Activated T-helper 2 cell treated with anti-CD3 and anti-CD28 coated beads, Interferon-gamma antibody, Interleukin-2, Interleukin-4, amounts not matched to agents 10 μg/mL and 5 μg/mL and 100 μg/mL, durations not matched to agents 14 hours and 24 hours and 36 hours (primary cell): ENCODE measurements at regions of chr3 and their contacts with region 1.

Region 1: GRCh38 chr3:113947372-113948014 is at the start of gene ZDHHC23:
- DNase-seq: peak; percentile 64
- H3K4me3 Mint-ChIP-seq: peak within 1 kb of the TSS; percentile 75
- H3K27ac Mint-ChIP-seq: peak within 1 kb of the TSS; percentile 61
- H3K4me1 Mint-ChIP-seq: peaks cover 7% of the 10 kb centered on the region
- H3K27me3 Mint-ChIP-seq: peaks cover 53% of the 10 kb centered on the region
- total RNA-seq, gene ZDHHC23: 2.6 and 2.9 TPM in 2 replicates

Region 2: DNA sequence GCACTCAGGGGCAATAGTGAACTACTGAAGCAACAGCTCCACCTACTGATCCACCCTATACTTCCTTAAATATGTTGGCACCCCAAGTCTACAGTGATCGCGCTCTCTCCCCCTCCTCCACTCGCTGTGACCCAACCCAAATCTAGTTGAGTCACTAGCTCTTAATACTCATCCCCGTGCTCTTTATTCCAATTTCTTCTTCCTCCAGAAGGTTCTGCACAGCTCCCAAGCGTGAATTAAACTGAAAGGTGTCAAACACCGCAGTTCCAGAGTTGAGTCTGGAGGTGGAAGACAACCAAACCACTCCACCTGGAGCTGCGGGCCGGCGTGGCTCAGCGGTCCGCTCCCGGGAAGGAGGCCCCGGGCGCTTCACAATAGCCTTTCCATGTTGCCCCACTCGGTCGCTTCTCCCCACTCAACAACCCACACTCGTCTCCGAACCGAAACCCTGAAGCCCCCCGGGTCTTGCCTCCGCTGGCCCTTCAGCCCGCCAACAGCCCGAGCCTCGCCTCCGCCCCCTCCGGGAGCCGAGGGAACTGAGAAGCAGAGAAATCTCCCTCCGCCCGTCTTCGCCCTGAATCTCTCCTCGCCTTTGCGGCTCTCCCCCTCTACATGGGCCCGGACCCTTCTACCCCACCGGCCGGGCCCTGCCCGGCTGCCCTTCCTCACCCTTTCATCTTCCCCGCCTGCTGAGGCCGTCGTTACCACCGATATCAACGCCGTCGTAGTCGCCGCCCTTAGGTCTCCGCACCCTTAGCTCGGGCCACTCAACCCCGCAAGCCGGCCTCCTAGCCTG is 202.0 kb before region 1 on chr3:
- intact Hi-C with region 1: loop called (anchors 2 kb)
- DNase-seq: peak; percentile 73
- H3K4me3 Mint-ChIP-seq: peak overlapping the region; percentile 96
- H3K27ac Mint-ChIP-seq: peak overlapping the region; percentile 100
- H3K4me1 Mint-ChIP-seq: peaks cover 64% of the 10 kb centered on the region
- H3K27me3 Mint-ChIP-seq: peaks cover 3% of the 10 kb centered on the region

Region 3: DNA sequence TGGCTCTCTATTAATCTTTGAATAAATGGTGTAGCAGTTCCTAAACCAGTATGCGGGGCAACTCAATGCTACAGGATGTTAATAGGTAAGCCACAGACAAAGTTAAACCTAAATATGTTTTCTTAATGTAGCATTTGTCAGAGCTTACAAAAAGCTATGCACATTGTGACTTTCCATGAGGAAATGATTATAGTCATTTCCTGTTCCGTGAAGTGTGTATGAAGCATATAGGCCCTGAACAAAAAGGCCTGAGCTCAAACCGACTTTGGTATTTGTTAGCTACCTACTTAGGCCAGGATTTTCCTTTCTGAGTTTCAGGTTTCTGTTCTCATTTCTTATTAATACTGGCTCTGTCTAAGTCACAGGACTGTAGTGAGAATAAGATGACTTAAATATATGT is 275.6 kb after region 1 on chr3:
- intact Hi-C with region 1: loop called (anchors 5 kb)
- DNase-seq: no peak
- H3K4me3 Mint-ChIP-seq: peak overlapping the region; percentile 37
- H3K27ac Mint-ChIP-seq: peak overlapping the region; percentile 91
- H3K4me1 Mint-ChIP-seq: peaks cover 79% of the 10 kb centered on the region
- H3K27me3 Mint-ChIP-seq: no peaks in the 10 kb centered on the region